Cardiac septum (tissue), 1 donor: ENCODE measurements at regions of chr13 and their contacts with region 1.

Region 1: GRCh38 chr13:20924758-20925394 is 22.3 kb upstream of the XPO4 start:
- DNase-seq: peak; percentile 78

Region 2: DNA sequence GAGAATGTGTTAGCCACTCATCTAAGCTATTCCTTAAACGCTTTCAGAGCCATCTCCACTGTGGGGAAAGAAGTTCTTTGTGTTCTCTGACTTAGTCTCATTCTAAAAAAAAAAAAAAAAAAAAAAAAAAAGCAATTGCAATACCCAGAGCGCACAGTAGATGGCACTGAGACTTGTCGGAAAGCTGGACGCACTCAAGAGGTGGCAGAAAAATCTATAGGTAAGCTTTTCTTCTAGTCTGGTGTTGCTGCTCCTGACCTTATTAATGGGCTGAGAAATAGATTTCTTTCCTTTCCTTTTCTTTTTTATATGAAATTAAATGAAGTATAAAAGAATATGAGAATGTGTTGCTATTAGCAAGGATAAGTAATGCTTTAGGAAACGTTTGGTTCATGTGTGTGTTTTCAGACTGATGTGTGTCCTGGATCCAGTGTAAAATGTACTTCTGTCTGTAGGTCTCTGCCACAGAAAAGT is 727.5 kb before region 1 on chr13:
- intact Hi-C with region 1: loop called (anchors 10 kb)
- DNase-seq: no peak

Region 3: GRCh38 chr13:20495082-20496023 is 429.5 kb before region 1 on chr13:
- intact Hi-C with region 1: loop called (anchors 2 kb)
- DNase-seq: no peak